ENCODE measurements at regions of chr12 and their contacts with region 1.

Region 1: DNA sequence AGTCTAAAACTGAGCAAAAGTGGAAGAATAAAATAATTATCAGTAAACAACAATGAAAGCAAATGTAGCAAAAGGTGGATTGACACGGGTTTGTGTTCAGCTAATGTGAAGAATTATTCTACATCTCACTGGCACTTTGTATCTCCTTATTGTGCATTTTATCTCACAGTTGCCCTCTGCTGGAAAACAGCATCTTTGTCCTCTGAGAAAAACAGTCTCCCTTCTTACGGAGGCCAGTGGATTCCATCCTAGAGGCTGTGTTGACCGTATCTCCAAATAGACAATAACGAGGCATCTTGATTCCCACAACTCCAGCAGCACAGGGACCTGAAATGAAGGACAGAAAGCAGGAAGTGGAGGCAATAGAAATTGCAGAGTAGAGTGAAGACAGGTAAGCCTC is 51.3 kb upstream of the PLBD1 start:
- DNase-seq: no peak
- ATAC-seq: peak; percentile 26

Region 2: DNA sequence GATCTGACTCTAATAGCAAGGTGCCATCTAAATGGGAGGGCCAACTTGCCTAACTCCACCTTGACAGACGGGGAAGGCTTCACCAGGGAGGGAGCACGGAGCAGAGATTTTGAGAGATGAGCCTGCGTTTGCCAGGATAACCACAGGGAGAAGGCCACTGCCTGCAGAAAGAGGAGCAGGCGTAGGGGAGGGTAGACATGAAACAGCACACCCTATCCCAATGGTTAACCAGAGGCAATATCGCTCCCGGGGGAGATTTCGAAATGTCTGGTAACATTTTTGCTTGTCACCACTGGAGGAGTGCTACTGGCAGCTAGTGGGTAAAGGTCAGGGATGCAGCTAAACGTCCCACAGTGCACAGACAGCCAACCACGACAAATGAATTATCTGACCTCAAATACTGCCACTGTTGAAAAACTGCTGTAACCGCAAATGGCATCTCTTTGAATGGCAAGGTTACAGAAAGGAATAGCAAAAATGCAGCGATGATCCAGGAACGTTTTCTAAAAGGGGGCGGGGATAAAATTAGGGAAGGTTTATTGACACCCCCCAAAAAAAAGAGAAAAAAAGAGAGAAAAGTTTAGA is 379.5 kb before region 1 on chr12:
- intact Hi-C with region 1: loop called in 1 of 2 experiments (anchors 2 kb)
- DNase-seq: no peak
- ATAC-seq: peak; percentile 31

Region 3: GRCh38 chr12:14365294-14366208 is 253.4 kb before region 1 on chr12 and contains the start of gene ATF7IP:
- intact Hi-C with region 1: no loop called
- DNase-seq: peak; percentile 97
- ATAC-seq: peak; percentile 95
- total RNA-seq, gene ATF7IP: 42.9 to 46.3 TPM

Measured in left colon (tissue), 2 donors.